Common myeloid progenitor, CD34-positive (primary cell): ENCODE measurements at regions of chr11 and their contacts with region 1.

Region 1: DNA sequence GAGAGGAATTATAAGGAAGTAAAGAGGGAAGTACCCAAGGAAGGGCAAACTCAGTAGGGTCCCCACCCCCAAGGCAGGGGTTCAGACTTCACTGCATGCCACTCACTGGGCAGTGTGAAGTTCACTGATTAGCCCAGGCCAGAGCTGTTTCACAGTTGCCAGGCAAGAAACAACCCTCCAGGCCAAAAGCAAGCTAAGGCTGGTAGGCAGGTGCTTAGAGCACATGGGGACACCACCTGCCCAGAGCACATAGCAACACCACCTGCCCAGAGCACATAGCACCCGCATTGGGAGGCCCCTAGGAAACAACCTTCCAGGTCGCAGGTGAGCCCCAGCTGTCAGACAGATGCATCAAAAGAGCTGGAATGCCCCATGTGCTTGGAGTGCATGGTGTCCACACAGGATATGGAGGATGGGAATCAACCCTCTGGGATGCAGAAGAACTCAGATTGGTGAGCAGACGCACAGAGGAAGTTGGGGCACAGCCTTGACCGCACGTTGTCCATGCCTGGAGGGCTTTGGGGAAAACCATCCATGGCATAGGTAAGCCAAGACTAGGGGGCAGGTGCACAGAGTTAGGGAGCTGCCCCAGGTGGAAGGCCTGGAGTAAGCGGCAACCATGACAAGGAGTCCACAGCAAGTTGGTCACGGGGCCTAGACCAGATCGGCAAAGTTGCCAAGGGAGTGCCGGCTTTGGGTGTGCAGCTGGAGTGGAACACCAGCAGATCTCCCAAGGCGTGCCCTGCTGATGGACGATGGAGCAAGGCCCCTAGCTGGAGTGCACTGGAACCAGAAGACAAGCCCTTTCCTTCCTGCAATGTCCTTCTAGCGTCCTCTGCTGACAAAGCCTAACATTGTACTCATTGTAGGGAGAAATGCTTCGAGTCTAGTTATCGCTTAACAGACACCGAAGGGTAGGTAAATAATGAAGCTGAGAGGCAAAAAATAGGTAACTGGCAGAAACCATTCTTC is 7.8 kb upstream of the TMEM216 start:
- DNase-seq: no peak
- H3K4me3 ChIP-seq: no peak overlapping the region
- H3K27ac ChIP-seq: no peak overlapping the region
- H3K4me1 ChIP-seq: peaks cover 0 to 2% (median 0%) of the 10 kb centered on the region in 4 experiments
- H3K27me3 ChIP-seq: no peaks in the 10 kb centered on the region

Region 2: DNA sequence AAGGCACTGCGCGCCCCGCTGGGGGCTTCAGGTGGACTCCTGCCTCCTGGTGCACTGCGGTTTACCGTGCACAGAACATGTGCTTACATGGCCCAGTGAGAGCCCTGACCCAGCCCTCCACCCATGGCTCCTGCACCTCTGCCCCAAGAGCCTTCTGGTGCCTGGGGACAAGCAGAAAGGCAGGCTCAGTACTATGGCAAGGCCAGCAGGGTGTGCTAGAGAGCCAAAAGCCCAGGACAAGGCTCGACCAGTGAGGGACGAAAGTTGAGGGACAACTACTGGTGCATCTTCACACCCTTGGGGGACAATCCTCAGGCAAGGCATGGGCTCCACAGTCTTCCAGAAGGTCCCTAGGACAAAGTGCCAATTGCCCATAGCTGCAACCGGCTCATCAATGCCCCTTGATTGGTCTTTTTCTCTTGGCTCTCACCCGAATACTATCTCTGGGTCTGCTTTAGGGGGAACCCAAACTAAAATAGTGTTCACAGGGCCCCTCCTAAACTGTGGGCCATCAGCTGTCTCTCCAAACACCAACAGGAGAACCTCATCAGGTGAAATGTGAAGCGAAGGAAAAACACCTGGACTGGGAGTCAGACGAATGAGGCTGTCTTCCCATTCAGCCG is 130.0 kb before region 1 on chr11:
- CTCF ChIA-PET with region 1: interaction called, 30 read pairs
- POLR2A ChIA-PET with region 1: no interaction called
- DNase-seq: peak; percentile 56 to 73 (median 62)
- H3K4me3 ChIP-seq: no peak overlapping the region
- H3K27ac ChIP-seq: no peak overlapping the region
- H3K4me1 ChIP-seq: peaks cover 0 to 2% (median 0%) of the 10 kb centered on the region in 4 experiments
- H3K27me3 ChIP-seq: no peaks in the 10 kb centered on the region

Region 3: DNA sequence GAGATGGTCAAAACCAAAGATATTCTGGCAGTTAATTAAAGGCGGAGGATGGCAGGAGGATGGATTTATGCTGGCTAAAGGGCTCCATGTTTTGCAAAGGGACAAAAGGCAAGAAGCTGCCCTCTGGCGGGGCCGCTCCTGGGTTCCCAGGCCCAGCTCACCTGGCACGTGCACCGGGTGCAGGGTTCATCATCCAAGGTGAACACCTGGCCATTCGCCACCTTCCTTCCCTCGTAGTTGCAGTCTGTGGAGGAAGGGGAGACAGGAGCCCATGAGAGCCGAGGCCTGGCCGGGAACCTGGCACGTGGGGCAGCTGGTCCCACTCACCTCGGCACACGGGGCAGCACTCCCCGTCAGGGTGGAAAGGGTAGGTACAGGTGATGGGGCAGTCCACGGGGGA is 119.8 kb before region 1 on chr11:
- CTCF ChIA-PET with region 1: no interaction called
- POLR2A ChIA-PET with region 1: no interaction called
- DNase-seq: no peak
- H3K4me3 ChIP-seq: no peak overlapping the region
- H3K27ac ChIP-seq: no peak overlapping the region
- H3K4me1 ChIP-seq: no peaks in the 10 kb centered on the region
- H3K27me3 ChIP-seq: no peaks in the 10 kb centered on the region

Region 4: DNA sequence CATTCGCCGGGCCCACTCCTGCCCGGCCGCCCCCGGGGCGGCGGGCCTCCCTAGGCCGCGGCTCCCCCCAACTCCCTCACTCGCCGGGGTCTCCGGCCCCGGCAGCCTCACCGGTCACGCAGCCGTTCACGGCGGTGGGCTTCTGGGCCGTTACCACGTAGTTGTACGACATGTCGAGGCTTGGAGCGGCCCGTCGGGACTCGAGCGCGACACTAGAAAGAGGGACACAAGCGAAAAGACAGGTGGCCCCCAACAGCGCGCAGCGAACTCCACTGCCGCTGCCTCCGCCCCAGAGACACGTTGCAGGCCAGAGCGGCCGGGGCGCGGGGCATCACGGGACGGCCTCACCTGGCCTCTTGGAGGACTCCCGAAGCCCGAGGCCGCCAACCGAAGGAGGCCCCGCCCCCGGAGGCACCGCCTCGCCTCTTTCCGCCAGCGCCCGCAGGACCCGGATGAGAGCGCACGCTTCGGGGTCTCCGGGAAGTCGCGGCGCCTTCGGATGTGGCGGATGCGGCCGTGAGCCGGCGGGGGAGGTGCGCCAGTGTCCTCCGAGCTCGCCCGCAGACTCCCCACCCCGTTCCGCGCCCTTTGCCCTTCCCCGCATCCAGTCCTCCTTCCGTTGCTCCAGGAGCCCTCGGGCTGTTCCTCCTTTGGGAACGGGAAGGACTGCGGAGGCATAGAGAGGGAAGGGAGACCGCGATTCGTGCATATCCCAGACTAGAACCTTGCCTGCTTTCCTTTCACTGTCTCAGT is 51.6 kb before region 1 on chr11 and contains the starts of genes DDB1 and TKFC:
- CTCF ChIA-PET with region 1: interaction called, 341 read pairs
- POLR2A ChIA-PET with region 1: interaction called, 4 read pairs
- DNase-seq: peak; percentile 93 to 97 (median 97)
- H3K4me3 ChIP-seq: peak within 1 kb of the TSS; percentile 75 to 94 (median 85)
- H3K27ac ChIP-seq: peak within 1 kb of the TSS; percentile 93 to 97
- H3K4me1 ChIP-seq: peaks cover 4 to 50% (median 31%) of the 10 kb centered on the region in 4 experiments
- H3K27me3 ChIP-seq: no peaks in the 10 kb centered on the region

Region 5: DNA sequence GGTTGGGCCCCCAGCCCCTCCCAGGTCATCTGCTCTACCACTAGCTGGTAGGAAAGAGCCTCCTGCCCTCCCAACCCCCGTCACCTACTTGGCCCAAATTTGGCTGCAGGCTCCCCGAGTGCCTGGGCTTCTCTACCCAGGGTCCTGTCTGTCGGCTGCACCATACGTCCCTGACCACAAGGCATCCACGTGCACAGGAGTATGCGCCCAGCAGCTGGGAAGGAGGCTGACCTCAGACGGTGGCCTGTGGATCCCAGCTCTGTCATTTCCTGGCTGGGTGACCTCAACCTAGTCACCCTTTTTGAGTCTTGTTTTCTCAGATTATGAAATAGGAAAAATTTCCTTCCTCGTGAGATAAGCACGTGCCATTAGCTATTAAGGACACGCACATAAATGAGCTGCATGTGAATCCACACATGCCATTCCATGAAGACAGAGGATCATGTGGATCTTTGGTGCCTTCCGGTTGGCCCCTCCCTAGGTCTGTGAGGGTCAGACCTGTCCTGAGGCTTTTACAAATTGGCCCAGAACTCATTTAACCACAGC is 36.6 kb before region 1 on chr11:
- CTCF ChIA-PET with region 1: interaction called, 16 read pairs
- POLR2A ChIA-PET with region 1: no interaction called
- DNase-seq: no peak
- H3K4me3 ChIP-seq: no peak overlapping the region
- H3K27ac ChIP-seq: no peak overlapping the region
- H3K4me1 ChIP-seq: peaks cover 0 to 13% (median 9%) of the 10 kb centered on the region in 4 experiments
- H3K27me3 ChIP-seq: no peaks in the 10 kb centered on the region

Region 6: GRCh38 chr11:61361686-61362541 is 22.6 kb before region 1 on chr11 and contains the starts of genes CYB561A3 and TMEM138:
- CTCF ChIA-PET with region 1: interaction called, 113 read pairs
- POLR2A ChIA-PET with region 1: no interaction called
- DNase-seq: peak; percentile 90 to 96 (median 95)
- H3K4me3 ChIP-seq: peak within 1 kb of the TSS; percentile 78 to 99 (median 94)
- H3K27ac ChIP-seq: peak within 1 kb of the TSS; percentile 91 to 96
- H3K4me1 ChIP-seq: peaks cover 11 to 47% (median 39%) of the 10 kb centered on the region in 4 experiments
- H3K27me3 ChIP-seq: no peaks in the 10 kb centered on the region

Region 7: DNA sequence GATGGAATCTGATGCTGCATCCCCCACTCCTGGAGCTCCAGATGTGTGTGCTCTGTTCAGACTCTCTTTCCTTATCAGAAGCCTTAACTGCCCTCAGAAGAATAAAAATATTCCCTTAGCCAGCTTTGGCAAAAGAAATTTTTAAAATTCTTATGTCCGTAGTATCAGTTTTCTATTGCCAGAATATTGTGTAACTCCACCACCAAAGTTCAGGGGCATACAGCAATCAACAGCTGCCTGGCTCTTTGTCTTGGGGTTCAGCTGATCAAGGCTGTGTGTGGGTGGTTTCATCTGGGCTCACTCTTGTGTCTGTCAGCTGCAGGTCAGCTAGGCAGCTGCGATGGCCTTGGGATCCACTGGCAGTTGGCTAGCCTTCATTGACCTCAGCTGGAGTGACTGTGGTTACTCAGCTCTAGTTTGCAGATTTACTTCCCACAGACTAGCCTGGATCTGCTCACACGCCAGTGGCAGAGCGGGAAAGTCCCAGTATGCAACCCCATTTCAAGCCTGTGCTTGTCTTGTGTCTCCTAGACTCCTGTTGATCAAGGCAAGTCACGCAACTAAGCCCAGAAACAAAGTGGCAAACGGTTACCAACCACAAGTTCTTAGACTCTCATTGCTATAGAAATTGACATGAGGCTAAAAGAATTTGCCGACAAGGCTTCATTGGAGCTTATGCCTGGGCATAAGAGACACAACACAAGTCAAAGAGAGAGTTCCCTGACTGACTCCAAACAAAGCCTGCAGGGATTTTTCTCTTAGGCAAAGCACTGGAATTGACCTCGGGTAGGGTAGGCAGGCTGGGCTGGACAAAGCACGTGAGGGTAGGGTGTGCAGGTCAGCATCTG is 15.0 kb before region 1 on chr11:
- CTCF ChIA-PET with region 1: interaction called, 113 read pairs
- POLR2A ChIA-PET with region 1: interaction called, 3 read pairs
- DNase-seq: no peak
- H3K4me3 ChIP-seq: no peak overlapping the region
- H3K27ac ChIP-seq: no peak overlapping the region
- H3K4me1 ChIP-seq: no peaks in the 10 kb centered on the region
- H3K27me3 ChIP-seq: no peaks in the 10 kb centered on the region

Region 8: DNA sequence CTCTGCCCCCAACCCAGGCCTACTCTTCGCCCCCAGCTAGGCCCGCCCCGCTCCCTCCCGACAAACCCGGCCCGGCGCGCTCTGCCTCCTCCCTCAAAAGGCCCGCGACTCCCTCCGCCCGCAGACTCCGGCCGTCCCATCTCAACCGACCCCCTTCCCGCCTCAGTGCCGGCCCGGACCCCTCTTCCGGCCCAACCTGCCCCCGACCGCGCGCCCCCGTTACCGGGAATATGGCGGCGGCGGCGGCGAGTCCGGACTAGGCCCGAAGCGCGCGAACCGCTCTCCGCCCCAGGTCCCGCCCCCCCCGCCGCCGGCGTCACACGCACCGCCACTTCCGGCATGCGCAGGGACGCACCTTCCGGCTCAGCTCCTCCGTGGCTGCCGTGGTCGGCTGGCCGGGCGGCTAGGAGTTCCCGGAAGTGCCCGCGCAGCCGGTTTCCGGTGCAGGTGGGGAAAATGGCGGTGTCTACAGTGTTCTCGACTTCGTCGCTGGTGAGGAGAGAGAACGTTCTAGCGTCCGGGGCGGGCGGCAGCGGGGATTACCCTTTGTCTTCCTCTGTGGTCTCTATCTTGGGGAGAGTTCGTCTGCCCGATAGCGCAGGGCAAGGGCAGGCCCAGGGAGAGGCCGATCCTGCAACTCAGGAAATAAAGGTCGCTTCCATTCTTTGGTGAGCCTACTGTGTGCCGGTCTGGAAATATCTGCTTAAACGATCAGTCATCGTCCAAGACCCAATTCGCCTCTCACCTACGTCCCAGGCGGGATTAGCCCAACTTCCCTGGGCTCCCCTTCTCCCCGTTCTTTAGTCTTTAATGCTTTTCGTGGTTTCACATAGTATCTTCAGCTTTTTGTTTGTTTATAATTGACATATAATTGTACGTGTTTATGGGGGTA is 45.4 kb after region 1 on chr11 and contains the starts of genes CPSF7 and SDHAF2:
- CTCF ChIA-PET with region 1: interaction called, 10 read pairs
- POLR2A ChIA-PET with region 1: interaction called, 3 read pairs
- DNase-seq: peak; percentile 96 to 99 (median 98)
- H3K4me3 ChIP-seq: peak within 1 kb of the TSS; percentile 49 to 100 (median 88)
- H3K27ac ChIP-seq: peak within 1 kb of the TSS; percentile 97 to 98
- H3K4me1 ChIP-seq: peaks cover 10 to 28% (median 19%) of the 10 kb centered on the region in 4 experiments
- H3K27me3 ChIP-seq: no peaks in the 10 kb centered on the region